ENCODE measurements at regions of chr19 and their contacts with region 1.

Region 1: DNA sequence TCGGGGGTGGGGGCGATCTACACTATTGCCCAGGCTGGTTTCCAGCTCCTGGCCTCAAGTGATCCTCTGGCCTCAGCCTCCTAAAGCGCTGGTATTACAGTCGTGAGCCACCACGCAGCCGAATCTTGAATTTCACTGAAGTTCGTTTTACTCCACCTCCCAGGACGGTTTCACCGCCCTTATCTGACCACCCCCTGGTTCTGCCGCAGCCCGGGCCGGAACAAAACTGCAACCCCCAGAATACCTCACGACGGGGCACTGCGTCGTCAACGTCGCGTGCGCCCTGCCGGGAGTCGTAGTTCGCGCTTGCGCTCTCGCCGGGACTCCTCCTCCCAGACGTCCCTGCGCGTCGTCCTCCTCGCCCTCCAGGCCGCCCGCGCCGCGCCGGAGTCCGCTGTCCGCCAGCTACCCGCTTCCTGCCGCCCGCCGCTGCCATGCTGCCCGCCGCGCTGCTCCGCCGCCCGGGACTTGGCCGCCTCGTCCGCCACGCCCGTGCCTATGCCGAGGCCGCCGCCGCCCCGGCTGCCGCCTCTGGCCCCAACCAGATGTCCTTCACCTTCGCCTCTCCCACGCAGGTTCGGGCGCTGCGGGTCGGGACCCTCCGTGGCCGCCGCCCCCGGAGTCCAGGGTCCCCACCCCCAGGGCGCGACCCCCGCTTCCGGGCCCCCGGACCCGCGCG is at the start of gene ATP5F1D:
- DNase-seq: peak; percentile 96
- ATAC-seq: peak; percentile 79
- H3K4me3 Mint-ChIP-seq: peak within 1 kb of the TSS; percentile 83
- H3K27ac Mint-ChIP-seq: peak within 1 kb of the TSS; percentile 86
- H3K4me1 Mint-ChIP-seq: peaks cover 38% of the 10 kb centered on the region
- H3K27me3 Mint-ChIP-seq: peaks cover 6% of the 10 kb centered on the region
- total RNA-seq, gene ATP5F1D: 161 to 180 TPM

Region 2: GRCh38 chr19:860481-861101 is 381.0 kb before region 1 on chr19:
- CTCF ChIA-PET with region 1: no interaction called
- POLR2A ChIA-PET with region 1: no interaction called
- intact Hi-C with region 1: loop called in 1 of 2 experiments (anchors 2 kb)
- DNase-seq: peak; percentile 73
- ATAC-seq: peak; percentile 17
- H3K4me3 Mint-ChIP-seq: no peak overlapping the region
- H3K27ac Mint-ChIP-seq: no peak overlapping the region
- H3K4me1 Mint-ChIP-seq: peaks cover 13% of the 10 kb centered on the region
- H3K27me3 Mint-ChIP-seq: peaks cover 13% of the 10 kb centered on the region

Region 3: GRCh38 chr19:913080-913748 is 328.3 kb before region 1 on chr19 and contains the start of gene R3HDM4:
- CTCF ChIA-PET with region 1: no interaction called
- POLR2A ChIA-PET with region 1: no interaction called
- intact Hi-C with region 1: no loop called
- DNase-seq: peak; percentile 92
- ATAC-seq: peak; percentile 57
- H3K4me3 Mint-ChIP-seq: peak within 1 kb of the TSS; percentile 79
- H3K27ac Mint-ChIP-seq: peak within 1 kb of the TSS; percentile 90
- H3K4me1 Mint-ChIP-seq: peaks cover 32% of the 10 kb centered on the region
- H3K27me3 Mint-ChIP-seq: no peaks in the 10 kb centered on the region
- total RNA-seq, gene R3HDM4: 73.7 to 83.3 TPM

Region 4: DNA sequence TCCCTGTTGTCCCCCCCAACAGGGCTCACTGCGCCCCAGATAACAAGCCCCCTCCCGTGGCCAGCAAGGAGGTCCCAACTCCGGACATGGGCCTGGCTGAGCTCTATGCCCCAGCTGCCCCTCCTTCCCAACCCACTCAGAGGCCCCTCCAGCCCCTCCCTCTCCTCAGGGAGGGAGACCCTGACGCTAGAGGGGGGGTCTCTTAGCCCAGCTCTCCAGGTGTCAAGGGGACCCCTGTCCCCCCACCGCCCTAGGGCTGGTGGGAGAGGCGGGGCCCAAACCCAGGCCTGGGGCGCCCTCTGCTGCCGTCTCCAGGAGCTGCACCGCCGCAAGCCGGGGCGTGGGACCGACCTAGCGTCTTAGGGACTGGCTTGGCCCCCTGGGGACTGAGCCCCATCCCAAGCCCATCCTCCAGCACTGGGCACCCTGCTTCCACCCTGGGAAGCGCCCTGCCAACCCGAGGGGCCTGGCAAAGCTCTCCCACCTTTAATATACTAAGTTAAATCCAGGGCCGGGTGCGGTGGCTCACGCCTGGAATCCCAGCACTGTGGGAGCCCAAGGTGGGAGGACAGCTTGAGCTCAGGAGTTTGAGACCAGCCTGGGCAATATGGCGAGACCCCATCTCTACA is 239.9 kb before region 1 on chr19:
- CTCF ChIA-PET with region 1: no interaction called
- POLR2A ChIA-PET with region 1: no interaction called
- intact Hi-C with region 1: loop called in 1 of 2 experiments (anchors 1 kb)
- DNase-seq: peak; percentile 84
- ATAC-seq: peak; percentile 77
- H3K4me3 Mint-ChIP-seq: no peak overlapping the region
- H3K27ac Mint-ChIP-seq: no peak overlapping the region
- H3K4me1 Mint-ChIP-seq: peaks cover 5% of the 10 kb centered on the region
- H3K27me3 Mint-ChIP-seq: peaks cover 19% of the 10 kb centered on the region

Region 5: GRCh38 chr19:1064661-1065605 is 176.6 kb before region 1 on chr19:
- CTCF ChIA-PET with region 1: interaction called, 9 read pairs
- POLR2A ChIA-PET with region 1: no interaction called
- intact Hi-C with region 1: loop called in 1 of 2 experiments (anchors 2 kb)
- DNase-seq: peak; percentile 86
- ATAC-seq: peak; percentile 48
- H3K4me3 Mint-ChIP-seq: no peak overlapping the region
- H3K27ac Mint-ChIP-seq: no peak overlapping the region
- H3K4me1 Mint-ChIP-seq: peaks cover 33% of the 10 kb centered on the region
- H3K27me3 Mint-ChIP-seq: no peaks in the 10 kb centered on the region

Region 6: GRCh38 chr19:1103708-1104310 is 137.7 kb before region 1 on chr19 and contains the start of gene GPX4:
- CTCF ChIA-PET with region 1: interaction called, 3 read pairs
- POLR2A ChIA-PET with region 1: no interaction called
- intact Hi-C with region 1: loop called (anchors 2 kb)
- DNase-seq: peak; percentile 100
- ATAC-seq: peak; percentile 81
- H3K4me3 Mint-ChIP-seq: peak within 1 kb of the TSS; percentile 71
- H3K27ac Mint-ChIP-seq: peak within 1 kb of the TSS; percentile 83
- H3K4me1 Mint-ChIP-seq: peaks cover 52% of the 10 kb centered on the region
- H3K27me3 Mint-ChIP-seq: no peaks in the 10 kb centered on the region
- total RNA-seq, gene GPX4: 192 to 218 TPM

Region 7: GRCh38 chr19:1173845-1174809 is 67.4 kb before region 1 on chr19 and contains the start of gene SBNO2:
- CTCF ChIA-PET with region 1: interaction called, 3 read pairs
- POLR2A ChIA-PET with region 1: no interaction called
- intact Hi-C with region 1: loop called in 1 of 2 experiments (anchors 2 kb)
- DNase-seq: peak; percentile 96
- ATAC-seq: peak; percentile 93
- H3K4me3 Mint-ChIP-seq: peak within 1 kb of the TSS; percentile 89
- H3K27ac Mint-ChIP-seq: peak within 1 kb of the TSS; percentile 92
- H3K4me1 Mint-ChIP-seq: peaks cover 34% of the 10 kb centered on the region
- H3K27me3 Mint-ChIP-seq: no peaks in the 10 kb centered on the region
- total RNA-seq, gene SBNO2: 108 to 113 TPM

Region 8: DNA sequence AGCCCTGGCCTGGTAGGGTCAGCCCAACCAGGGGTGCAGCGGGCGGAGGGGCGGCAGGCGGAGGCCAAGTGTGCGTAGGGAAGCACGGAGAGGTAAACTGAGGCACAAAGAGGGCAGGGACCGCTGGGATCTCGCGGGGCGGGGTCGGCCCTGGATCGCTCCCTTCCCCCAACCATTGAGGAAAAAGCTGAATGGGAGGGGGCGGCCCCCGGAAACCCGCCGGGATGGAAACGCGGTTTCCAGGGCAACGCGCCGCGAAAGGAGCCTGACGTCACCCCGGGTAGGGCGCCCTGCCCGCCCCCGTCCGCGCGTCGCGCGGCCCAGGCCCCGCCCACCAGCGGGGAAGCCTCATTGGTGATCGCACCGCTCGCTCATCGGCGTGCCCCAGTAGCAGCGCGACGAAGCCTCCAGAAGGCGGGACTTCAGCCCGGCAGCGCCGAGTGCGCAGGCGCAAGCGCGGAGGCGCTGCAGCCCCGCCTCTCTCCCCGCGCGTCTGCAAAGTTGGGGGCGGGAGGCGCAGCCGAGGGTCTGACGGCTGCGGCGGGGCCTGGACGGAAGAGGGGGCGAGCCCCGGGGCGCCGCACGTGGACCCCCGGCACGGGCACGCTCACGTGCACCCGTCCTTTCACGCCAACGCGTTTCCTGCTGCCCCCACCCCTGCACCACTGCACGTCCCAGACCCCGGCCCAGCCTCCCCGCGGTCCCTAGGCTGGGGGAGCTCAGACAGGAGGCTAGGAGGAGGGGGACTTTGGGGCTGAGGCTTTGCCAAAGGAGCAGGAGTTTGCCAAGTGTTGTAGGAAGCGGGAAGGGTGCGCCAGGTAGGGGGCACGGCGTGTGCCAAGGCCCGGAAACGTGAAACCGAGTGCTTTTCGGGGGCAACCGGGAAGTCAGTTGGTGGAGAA is 19.3 kb after region 1 on chr19:
- CTCF ChIA-PET with region 1: interaction called, 163 read pairs
- POLR2A ChIA-PET with region 1: interaction called, 36 read pairs
- intact Hi-C with region 1: loop called in 1 of 2 experiments (anchors 1 kb)
- DNase-seq: peak; percentile 99
- ATAC-seq: peak; percentile 82
- H3K4me3 Mint-ChIP-seq: peak overlapping the region; percentile 95
- H3K27ac Mint-ChIP-seq: peak overlapping the region; percentile 87
- H3K4me1 Mint-ChIP-seq: peaks cover 54% of the 10 kb centered on the region
- H3K27me3 Mint-ChIP-seq: no peaks in the 10 kb centered on the region

Region 9: DNA sequence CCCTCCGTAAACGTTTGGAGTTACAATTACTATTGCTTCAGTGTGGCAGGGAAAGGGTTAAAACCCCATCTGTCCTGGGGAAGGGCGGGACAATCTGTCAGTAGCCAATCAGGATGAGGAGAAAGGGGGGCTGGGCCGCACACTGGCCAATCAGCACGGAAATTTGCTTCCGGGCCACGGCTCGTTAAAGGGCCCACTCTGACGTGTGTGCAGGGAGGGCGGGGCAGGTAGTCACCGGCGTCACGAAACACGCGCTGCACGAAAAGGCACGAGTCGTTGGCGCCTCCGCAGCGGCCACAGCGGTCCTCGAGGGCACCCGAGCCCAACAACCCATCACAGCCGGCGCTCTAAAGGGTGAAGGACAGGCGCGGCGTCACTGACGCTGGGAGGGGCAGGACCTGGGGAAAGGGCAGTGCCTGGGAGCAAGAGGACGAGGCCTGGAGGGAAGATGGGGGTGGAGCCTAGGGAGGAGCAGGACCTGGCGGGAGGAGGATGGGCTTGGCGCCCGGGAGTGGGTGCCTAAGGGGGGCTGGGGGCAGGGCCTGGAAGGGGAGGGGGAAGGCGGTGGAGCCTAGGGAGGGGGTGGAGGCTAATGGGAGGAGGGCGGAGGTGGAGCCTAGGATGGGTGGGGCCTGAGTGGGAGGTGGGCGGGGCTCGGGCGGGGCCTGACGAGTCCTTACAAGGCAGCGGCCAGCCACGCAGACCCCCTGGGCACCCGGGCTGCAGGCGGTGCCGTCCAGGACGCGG is 266.4 kb after region 1 on chr19:
- CTCF ChIA-PET with region 1: no interaction called
- POLR2A ChIA-PET with region 1: no interaction called
- intact Hi-C with region 1: no loop called
- DNase-seq: peak; percentile 95
- ATAC-seq: peak; percentile 87
- H3K4me3 Mint-ChIP-seq: peak overlapping the region; percentile 73
- H3K27ac Mint-ChIP-seq: peak overlapping the region; percentile 88
- H3K4me1 Mint-ChIP-seq: peaks cover 16% of the 10 kb centered on the region
- H3K27me3 Mint-ChIP-seq: no peaks in the 10 kb centered on the region

Measured in activated CD4-positive, alpha-beta T cell treated with anti-CD3 and anti-CD28 coated beads for 36 hours (primary cell).